ENCODE measurements at regions of chr17 and their contacts with region 1.

Region 1: GRCh38 chr17:77429919-77430752 is 289.4 kb downstream of the SEC14L1 start:
- DNase-seq: peak; percentile 72 to 85 (median 79)
- H3K4me3 ChIP-seq: no peak overlapping the region
- H3K27ac ChIP-seq: peak overlapping the region in 42 of 59 donors; percentile 3 to 88 (median 52)
- H3K27me3 ChIP-seq: no peaks in the 10 kb centered on the region
- CTCF ChIP-seq: peak; percentile 43 to 94 (median 82)

Region 2: DNA sequence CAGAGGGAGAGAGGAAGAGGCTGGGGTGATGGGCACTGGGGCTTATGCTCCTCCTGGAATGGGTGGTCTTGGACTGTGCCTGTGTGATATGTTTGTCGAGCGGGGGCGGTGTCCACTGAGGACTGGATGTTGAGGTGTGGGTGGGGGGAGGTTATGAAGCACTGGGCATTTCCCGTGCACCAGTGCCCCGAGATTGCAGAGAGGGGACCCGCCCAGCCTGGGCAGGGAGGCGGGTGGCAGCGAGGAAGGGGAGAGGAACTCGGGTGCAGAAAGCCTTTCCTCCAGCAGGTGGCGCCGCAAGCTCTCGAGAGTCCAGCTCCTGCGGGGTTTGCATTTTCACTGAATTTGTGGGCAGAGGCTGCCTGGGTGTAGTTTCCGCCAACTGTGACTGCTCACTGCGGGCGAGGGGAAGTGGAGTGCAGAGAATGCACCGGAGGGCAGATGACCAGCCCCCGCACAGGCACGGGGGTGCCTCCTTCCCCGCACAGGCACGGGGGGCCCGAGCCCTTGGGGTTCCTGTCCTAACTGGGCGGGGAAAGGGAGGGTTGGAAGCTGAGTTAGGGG is 98.8 kb before region 1 on chr17:
- intact Hi-C with region 1: loop called (anchors 1 kb)
- DNase-seq: peak; percentile 82 to 94 (median 90)
- H3K4me3 ChIP-seq: peak overlapping the region in 39 of 59 donors; percentile 4 to 62 (median 38)
- H3K27ac ChIP-seq: peak overlapping the region in 27 of 59 donors; percentile 3 to 74 (median 52)
- H3K27me3 ChIP-seq: no peaks in the 10 kb centered on the region
- CTCF ChIP-seq: peak; percentile 92 to 99 (median 98)

Region 3: GRCh38 chr17:77451245-77451893 is 21.2 kb after region 1 on chr17:
- intact Hi-C with region 1: loop called in 1 of 2 experiments (anchors 2 kb)
- DNase-seq: peak; percentile 69 to 93 (median 88)
- H3K4me3 ChIP-seq: peak overlapping the region; percentile 42 to 87 (median 67)
- H3K27ac ChIP-seq: peak overlapping the region; percentile 85 to 99 (median 97)
- H3K27me3 ChIP-seq: no peaks in the 10 kb centered on the region
- CTCF ChIP-seq: peak in 8 of 56 donors; percentile 0 to 37 (median 10)